Activated CD4-positive, alpha-beta memory T cell treated with anti-CD3 and anti-CD28 coated beads for 36 hours (primary cell): ENCODE measurements at regions of chr16 and their contacts with region 1.

Region 1: GRCh38 chr16:66830422-66831404 is at the start of gene NAE1:
- DNase-seq: peak; percentile 92
- H3K4me3 Mint-ChIP-seq: peak within 1 kb of the TSS; percentile 75
- H3K27ac Mint-ChIP-seq: peak within 1 kb of the TSS; percentile 49
- H3K4me1 Mint-ChIP-seq: peaks cover 43% of the 10 kb centered on the region
- H3K27me3 Mint-ChIP-seq: no peaks in the 10 kb centered on the region
- total RNA-seq, gene NAE1: 121 to 126 TPM

Region 2: DNA sequence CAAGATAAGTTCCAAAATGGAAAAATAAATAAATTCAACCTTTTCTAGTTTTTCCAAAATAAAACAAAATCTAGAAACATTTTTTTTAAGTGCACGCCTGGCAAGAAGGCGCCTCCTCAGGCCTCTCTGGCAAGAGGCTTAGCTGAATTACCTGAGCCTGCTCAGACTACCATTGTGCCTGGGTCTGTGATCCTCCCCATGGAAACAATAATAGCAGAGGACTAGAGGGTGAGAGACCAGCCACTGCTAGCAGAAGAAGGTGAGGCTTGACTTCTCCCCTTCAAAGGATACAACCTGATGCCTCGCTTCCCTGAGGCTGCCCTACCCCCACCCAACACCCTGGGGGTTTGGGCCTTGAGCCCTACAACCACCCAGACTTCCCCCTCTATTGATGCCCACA is 44.2 kb before region 1 on chr16:
- CTCF ChIA-PET with region 1: interaction called, 11 read pairs
- POLR2A ChIA-PET with region 1: no interaction called
- intact Hi-C with region 1: no loop called
- DNase-seq: no peak
- H3K4me3 Mint-ChIP-seq: no peak overlapping the region
- H3K27ac Mint-ChIP-seq: no peak overlapping the region
- H3K4me1 Mint-ChIP-seq: no peaks in the 10 kb centered on the region
- H3K27me3 Mint-ChIP-seq: no peaks in the 10 kb centered on the region

Region 3: GRCh38 chr16:66845791-66846221 is 15.1 kb after region 1 on chr16:
- CTCF ChIA-PET with region 1: interaction called, 19 read pairs
- POLR2A ChIA-PET with region 1: interaction called, 3 read pairs
- intact Hi-C with region 1: no loop called
- DNase-seq: no peak
- H3K4me3 Mint-ChIP-seq: no peak overlapping the region
- H3K27ac Mint-ChIP-seq: no peak overlapping the region
- H3K4me1 Mint-ChIP-seq: peaks cover 13% of the 10 kb centered on the region
- H3K27me3 Mint-ChIP-seq: peaks cover 32% of the 10 kb centered on the region

Region 4: DNA sequence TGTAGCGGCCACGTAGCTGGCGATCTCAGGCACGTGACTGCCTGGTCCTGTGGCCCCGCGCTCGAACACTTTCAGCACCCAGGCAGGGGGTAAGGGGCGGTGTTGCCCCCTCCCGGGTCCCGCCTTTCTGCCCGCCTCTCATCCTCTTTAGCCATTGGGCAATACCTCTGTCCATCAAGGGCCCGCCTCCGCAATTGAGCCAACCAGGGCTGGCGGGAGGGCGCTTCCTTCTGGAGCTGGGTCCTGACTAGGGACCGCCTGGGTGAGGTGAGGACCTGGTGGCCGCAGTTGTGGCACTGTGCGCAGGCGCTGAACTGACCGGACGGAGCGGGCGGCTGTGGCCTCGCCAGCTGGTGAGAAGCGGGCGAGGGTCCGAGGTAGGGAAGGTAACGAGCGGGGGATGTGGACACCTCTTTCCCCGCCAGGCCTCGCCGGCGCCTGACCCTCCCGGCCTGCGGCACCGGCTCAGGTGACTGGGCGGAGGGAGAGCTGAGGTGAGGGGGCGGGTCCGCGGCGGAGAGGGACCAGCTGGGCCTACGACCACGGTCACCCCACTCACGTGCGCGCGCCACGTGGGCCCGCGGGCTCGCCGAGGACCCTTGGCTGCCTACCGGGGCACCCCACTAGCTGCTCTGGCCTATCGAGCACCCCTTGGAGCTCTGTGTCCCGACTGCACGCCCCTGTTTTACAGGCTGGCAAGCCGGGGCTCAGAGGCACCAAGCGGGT is 49.7 kb after region 1 on chr16 and contains the start of gene PDP2:
- CTCF ChIA-PET with region 1: interaction called, 355 read pairs
- POLR2A ChIA-PET with region 1: interaction called, 9 read pairs
- intact Hi-C with region 1: no loop called
- DNase-seq: peak; percentile 95
- H3K4me3 Mint-ChIP-seq: peak within 1 kb of the TSS; percentile 94
- H3K27ac Mint-ChIP-seq: peak within 1 kb of the TSS; percentile 84
- H3K4me1 Mint-ChIP-seq: peaks cover 50% of the 10 kb centered on the region
- H3K27me3 Mint-ChIP-seq: no peaks in the 10 kb centered on the region
- total RNA-seq, gene PDP2: 42.4 to 45.5 TPM

Region 5: DNA sequence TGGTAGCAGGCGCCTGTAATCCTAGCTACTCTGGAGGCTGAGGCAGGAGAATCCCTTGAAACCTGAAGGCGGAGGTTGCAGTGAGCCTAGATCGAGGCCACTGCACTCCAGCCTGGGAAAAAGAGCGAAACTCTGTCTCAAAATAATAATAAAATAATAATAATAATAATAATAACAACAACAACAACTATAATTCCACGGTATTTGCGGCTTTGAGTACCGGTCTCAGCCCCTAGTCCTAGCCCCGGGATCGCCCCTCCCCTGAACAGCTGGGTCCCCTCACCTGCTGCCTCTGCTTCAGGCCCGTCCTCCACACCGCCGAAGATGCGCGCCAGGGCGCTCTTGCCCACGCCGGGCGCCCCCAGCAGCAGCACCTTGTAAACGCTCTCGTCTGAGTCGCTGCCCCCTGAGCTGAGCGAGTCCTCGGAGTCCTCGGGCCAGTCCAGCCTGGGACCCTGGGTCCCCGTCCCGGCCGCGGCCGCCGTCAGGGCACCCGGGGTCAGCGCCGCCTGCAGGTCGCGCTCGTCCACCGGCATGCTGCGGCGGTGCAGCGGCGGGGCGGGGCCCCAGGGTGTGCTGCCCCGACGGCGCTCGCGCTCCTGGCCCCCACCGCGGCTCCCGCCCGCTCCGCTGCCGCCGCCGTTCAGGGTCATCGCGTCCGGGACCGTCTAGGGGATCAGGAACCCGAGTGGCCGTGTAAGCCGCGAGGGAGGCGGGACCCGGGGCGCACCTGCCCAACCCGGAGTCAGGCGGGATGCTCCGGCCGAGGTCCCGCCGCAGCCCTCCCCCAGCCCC is 94.0 kb after region 1 on chr16:
- CTCF ChIA-PET with region 1: interaction called, 20 read pairs
- POLR2A ChIA-PET with region 1: no interaction called
- intact Hi-C with region 1: loop called (anchors 5 kb)
- DNase-seq: peak; percentile 65
- H3K4me3 Mint-ChIP-seq: peak overlapping the region; percentile 20
- H3K27ac Mint-ChIP-seq: no peak overlapping the region
- H3K4me1 Mint-ChIP-seq: peaks cover 11% of the 10 kb centered on the region
- H3K27me3 Mint-ChIP-seq: peaks cover 30% of the 10 kb centered on the region